ENCODE measurements at regions of chr3 and their contacts with region 1.

Region 1: GRCh38 chr3:52685709-52686691 is at the starts of genes GNL3 and PBRM1:
- DNase-seq: peak; percentile 88 to 97 (median 95)

Region 2: DNA sequence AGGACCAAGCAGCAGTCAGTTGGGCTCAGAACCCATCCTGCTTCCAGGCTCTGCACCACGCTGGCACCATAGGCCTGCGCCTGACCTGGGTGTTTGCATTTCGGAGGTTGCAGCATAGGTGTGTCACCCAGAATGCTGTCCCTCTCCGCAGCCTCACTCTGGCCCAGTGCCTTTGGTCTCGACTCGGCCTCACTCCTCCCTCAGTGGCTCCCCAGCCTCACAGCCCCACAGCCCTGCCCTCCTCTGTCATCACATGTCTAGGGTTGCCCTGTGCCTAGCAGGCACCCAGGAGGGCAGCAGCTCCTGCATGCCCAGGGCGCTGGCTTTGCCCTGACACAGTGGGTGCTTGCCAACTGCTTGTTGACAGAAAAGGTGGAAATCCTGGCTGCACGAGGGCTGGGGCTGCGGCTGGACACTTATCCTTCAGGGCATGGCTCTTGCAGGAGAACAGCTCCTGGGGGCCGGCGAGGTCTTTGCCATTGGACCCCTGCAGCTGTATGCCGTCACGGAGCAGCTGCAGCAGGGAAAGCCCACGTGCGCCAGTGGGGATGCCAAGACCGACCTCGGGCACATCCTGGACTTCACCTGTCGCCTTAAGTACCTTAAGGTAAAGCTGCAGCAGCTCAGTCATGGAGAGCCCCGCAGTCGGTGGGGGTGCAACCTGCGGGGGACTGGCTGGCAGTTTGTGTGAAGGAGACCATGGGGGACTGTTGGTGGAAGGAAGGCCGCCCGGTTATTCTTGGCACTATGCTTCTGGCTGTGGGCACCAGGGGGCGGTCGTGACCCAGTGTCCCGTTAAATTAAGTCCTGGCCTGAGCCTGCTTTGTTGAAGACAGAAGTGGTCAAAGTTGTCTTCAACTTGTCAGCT is 214.4 kb before region 1 on chr3:
- intact Hi-C with region 1: loop called (anchors 10 kb)
- DNase-seq: peak in 40 of 42 donors; percentile 33 to 87 (median 66)

Region 3: GRCh38 chr3:53045518-53046170 is 359.6 kb after region 1 on chr3 and contains the start of gene SFMBT1:
- intact Hi-C with region 1: loop called (anchors 5 kb)
- DNase-seq: peak in 41 of 42 donors; percentile 24 to 87 (median 69)